Panc1 (cell line): ENCODE measurements at regions of chr10 and their contacts with region 1.

Region 1: GRCh38 chr10:73506491-73506890 is 10.7 kb upstream of the PPP3CB start:
- DNase-seq: no peak
- ATAC-seq: no peak
- H3K4me3 ChIP-seq: no peak overlapping the region
- H3K27ac ChIP-seq: no peak overlapping the region
- H3K4me1 ChIP-seq: no peaks in the 10 kb centered on the region
- H3K27me3 ChIP-seq: no peaks in the 10 kb centered on the region
- CTCF ChIP-seq: no peak

Region 2: GRCh38 chr10:73448384-73448783 is 58.1 kb before region 1 on chr10:
- CTCF ChIA-PET with region 1: interaction called, 10 read pairs
- POLR2A ChIA-PET with region 1: no interaction called
- in situ Hi-C with region 1: no loop called
- intact Hi-C with region 1: no loop called
- DNase-seq: no peak
- ATAC-seq: no peak
- H3K4me3 ChIP-seq: no peak overlapping the region
- H3K27ac ChIP-seq: no peak overlapping the region
- H3K4me1 ChIP-seq: no peaks in the 10 kb centered on the region
- H3K27me3 ChIP-seq: no peaks in the 10 kb centered on the region
- CTCF ChIP-seq: no peak

Region 3: DNA sequence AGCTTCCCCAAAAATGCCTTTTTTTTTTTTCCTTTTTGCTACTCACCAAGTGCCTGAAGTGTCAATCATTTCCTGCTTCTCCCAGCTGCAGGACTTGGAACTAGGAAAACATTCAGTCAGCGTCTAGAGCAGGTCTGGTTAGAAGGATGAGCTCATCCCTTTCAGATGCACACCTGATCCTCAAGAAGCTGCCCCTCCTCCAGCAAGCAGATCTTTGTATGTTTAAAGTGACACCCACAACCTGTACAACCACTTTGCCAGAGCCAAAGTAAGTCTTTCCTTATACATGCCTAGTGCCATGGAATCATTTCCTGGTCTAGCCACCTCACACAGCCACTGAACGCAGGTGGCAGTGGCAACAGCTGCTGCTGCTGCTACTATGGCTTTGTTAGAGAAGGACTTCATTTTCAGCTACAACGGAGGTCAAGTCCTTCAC is 95.0 kb after region 1 on chr10:
- CTCF ChIA-PET with region 1: no interaction called
- POLR2A ChIA-PET with region 1: interaction called, 10 read pairs
- in situ Hi-C with region 1: no loop called
- intact Hi-C with region 1: no loop called
- DNase-seq: no peak
- ATAC-seq: peak; percentile 68
- H3K4me3 ChIP-seq: no peak overlapping the region
- H3K27ac ChIP-seq: peak overlapping the region; percentile 12; the same call in 1 of the 2 replicates
- H3K4me1 ChIP-seq: peaks cover 8% of the 10 kb centered on the region; the same call in 1 of the 2 replicates
- H3K27me3 ChIP-seq: no peaks in the 10 kb centered on the region
- CTCF ChIP-seq: no peak